Uterus (tissue), 4 donors: ENCODE measurements at regions of chr2 and their contacts with region 1.

Region 1: DNA sequence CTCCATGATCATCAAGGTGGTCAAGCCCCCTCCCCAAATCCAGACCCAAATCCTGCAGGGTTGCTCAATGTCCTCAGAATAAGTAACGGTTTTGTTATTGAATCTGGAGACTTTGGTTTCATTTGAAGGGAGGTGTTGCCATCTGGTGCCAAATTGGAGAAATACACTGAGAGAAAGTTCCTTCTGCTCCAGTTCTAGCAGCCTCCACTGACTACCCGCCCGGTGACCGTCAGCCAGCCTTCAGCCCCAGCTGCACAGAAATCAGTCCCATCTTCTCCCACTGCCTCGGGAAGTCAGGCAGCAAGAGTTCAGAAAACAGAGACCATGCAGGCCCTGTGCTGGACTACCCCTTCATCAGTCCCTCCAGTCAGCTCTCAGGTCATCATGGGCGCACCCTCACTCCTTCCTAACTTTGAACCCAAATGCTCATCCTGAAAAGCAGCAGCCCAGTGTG is 38.7 kb downstream of the PKDCC start:
- DNase-seq: peak; percentile 38 to 56
- H3K4me3 ChIP-seq: no peak overlapping the region
- H3K27ac ChIP-seq: no peak overlapping the region
- H3K4me1 ChIP-seq: no peaks in the 10 kb centered on the region
- H3K27me3 ChIP-seq: no peaks in the 10 kb centered on the region
- CTCF ChIP-seq: peak; percentile 77 to 92 (median 85)
- POLR2A ChIP-seq: no peak

Region 2: GRCh38 chr2:41853427-41854216 is 232.9 kb before region 1 on chr2:
- intact Hi-C with region 1: loop called (anchors 5 kb)
- DNase-seq: peak; percentile 46 to 69
- H3K4me3 ChIP-seq: no peak overlapping the region
- H3K27ac ChIP-seq: no peak overlapping the region
- H3K4me1 ChIP-seq: no peaks in the 10 kb centered on the region
- H3K27me3 ChIP-seq: no peaks in the 10 kb centered on the region
- CTCF ChIP-seq: peak; percentile 69 to 75 (median 71)
- POLR2A ChIP-seq: no peak

Region 3: DNA sequence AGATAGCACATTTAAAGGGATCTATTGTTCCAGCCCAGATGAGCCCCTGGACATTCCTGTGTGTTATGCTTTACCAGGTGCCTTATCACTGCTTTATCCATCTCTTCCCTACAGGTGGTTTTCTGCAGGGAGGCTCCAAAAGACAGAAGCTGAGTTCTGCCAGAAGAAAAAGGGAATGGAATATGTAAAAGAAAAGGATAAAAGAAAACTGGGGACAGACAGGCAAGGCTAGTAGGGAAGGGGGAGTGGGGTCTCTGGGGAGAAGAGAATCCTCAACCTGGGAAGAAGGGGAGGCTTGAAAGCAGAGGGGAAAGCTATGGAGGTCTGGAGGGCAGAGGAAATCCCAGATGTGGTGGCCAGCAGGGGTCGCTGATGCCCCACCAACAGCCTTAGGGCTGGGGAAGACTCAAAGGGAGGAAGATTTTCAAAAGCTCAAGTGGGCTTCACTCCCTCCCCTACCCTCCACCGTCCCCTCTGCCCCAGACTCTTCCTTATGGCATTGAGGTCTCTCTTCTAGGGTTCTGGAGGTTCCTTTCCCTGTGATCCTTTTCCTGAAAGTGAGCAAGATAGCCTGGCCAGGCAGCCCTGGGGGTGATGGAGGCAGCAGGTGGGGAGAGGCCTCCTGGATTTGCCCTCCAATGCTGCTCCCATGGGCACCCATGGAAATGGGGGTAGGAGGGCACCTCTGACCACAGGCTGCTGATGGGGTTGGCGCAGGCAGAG is 216.8 kb before region 1 on chr2:
- intact Hi-C with region 1: loop called (anchors 5 kb)
- DNase-seq: peak; percentile 78 to 86
- H3K4me3 ChIP-seq: no peak overlapping the region
- H3K27ac ChIP-seq: no peak overlapping the region
- H3K4me1 ChIP-seq: no peaks in the 10 kb centered on the region
- H3K27me3 ChIP-seq: no peaks in the 10 kb centered on the region
- CTCF ChIP-seq: peak; percentile 86 to 93 (median 90)
- POLR2A ChIP-seq: no peak

Region 4: DNA sequence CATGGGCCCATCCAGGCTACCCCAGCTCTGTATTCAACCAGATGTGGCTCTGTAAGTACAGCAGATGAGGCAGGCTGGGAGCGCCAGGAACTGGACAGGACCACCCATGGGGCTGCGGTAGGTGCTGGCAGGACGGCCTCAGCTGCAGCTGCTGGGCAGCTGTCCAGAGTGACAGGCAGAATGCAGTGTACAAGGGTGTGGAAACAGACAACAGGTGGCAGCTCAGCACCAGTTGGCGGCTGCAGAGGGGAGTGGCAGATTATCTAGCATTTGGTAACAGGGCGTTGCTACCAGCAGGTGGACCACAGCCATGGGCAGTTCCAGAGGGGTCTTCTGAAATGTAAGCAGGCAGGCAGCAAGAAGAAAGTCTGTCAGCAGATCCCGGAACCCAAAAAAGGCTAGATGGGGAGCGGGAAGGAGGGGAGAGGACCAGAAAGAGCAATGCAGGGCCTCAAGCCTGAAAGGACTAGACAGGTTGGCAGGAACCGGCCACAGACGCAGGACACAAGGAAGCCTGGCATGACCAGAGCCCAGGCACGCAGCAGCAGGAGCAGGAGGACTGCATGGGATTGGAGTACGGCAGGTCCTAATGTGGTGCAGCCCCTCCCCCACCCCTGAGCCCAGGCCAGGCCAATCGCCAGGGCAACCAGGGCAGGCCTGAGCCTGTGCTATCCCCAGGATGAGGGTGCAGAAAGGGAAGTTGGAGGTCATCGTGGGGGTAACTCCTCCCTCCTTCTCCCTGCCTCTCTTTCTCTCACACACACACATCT is 14.0 kb before region 1 on chr2:
- intact Hi-C with region 1: no loop called
- DNase-seq: no peak
- H3K4me3 ChIP-seq: no peak overlapping the region
- H3K27ac ChIP-seq: no peak overlapping the region
- H3K4me1 ChIP-seq: no peaks in the 10 kb centered on the region
- H3K27me3 ChIP-seq: no peaks in the 10 kb centered on the region
- CTCF ChIP-seq: no peak
- POLR2A ChIP-seq: no peak